ENCODE measurements at regions of chr11 and their contacts with region 1.

Region 1: DNA sequence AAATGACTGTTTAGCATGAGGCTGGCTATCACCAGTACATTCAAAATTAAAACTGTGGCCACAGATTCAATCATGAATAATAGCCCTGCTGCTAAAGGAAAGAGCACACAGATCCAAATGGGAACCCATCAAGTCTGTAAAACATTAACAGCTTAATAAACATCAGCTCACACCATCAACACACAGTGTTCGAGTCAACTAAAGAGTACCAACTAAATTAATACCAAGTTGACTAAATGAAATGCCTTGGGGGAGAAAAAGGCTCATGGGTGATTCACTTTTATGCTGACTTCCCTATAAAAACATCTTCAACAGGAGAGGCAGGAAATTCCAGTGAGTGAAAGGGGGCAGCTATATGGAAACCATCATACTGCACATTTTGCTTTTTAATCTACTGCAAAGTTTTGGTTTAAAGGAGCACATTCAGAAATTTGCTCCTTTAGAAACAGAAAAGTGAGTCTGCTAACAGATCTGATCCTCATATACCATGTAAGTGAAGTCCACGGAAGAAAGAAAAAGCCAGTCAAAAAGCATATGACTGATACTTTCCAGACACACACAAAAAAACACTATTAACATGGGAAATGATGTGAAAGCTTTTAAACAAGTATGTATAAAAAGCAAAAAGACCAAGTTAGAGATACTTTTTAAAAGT is 16.3 kb downstream of the LGR4 start:
- DNase-seq: no peak
- H3K4me3 ChIP-seq: no peak overlapping the region
- H3K27ac ChIP-seq: no peak overlapping the region
- H3K4me1 ChIP-seq: peaks cover 3% of the 10 kb centered on the region
- H3K27me3 ChIP-seq: no peaks in the 10 kb centered on the region
- CTCF ChIP-seq: no peak

Region 2: DNA sequence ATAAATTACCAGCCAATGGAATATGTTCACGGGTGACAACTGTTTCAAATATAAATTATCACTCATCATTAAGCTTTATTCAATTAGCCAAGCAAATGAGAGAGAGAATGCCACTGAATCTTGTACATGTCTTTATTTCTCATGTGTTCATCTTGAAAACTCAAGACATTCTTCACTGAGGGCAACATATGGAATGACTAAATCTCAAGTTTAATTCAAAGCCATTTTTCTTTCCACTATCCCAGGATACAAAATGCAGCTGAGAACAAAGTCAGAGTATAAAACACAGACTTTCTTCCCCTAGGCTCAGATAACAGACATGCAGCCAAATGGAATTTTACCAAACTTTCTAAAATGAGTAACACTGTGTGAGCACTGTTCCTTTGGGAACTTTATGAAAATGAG is 427.7 kb before region 1 on chr11:
- intact Hi-C with region 1: no loop called
- DNase-seq: no peak
- H3K4me3 ChIP-seq: no peak overlapping the region
- H3K27ac ChIP-seq: no peak overlapping the region
- H3K4me1 ChIP-seq: no peaks in the 10 kb centered on the region
- H3K27me3 ChIP-seq: no peaks in the 10 kb centered on the region
- CTCF ChIP-seq: no peak

Region 3: DNA sequence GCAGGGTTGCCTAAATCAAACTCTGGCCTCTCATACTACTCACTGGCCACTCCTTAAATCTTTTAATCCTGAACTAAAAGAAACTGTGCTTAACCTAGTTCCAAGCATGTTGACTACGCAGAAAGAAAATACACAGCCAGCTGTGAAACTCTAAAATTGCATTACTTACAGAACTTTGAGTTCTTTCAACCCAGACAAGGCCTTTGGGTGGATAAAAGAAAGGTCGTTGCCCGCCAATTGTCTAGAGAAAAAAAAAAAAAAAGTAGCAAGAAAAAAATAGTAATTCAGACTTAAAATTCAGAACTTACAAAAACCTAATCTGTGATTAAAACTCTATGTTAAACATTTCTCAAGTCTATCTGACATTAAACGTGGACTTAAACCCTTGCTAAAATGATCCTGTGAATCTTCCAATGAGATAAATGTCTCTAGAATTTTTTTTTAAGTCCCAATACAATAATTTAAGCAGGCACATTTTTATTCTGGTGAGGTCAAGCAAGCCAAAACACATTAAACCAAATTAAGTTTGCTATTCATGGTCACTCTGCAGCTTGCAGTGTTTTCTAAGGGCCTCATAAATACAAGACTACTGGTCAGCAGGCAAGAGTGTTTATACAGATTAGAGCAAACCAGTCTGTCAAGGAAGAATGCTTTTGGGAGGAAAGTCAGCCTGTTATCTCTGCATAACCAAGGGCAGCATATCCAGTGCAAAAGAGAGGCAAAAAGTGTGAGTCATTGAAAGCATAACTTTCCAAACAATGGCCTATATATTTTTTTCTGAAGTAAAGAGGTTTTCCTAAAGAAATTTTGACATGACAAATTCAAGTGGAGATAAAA is 63.8 kb before region 1 on chr11:
- intact Hi-C with region 1: loop called (anchors 10 kb)
- DNase-seq: no peak
- H3K4me3 ChIP-seq: no peak overlapping the region
- H3K27ac ChIP-seq: peak overlapping the region; percentile 31
- H3K4me1 ChIP-seq: peaks cover 24% of the 10 kb centered on the region
- H3K27me3 ChIP-seq: no peaks in the 10 kb centered on the region
- CTCF ChIP-seq: no peak